A549 (cell line): ENCODE measurements at regions of chr2 and their contacts with region 1.

Region 1: GRCh38 chr2:30361751-30362394 is 85.2 kb upstream of the LCLAT1 start:
- DNase-seq: no peak
- ATAC-seq: no peak
- H3K4me3 ChIP-seq: no peak overlapping the region
- H3K27ac ChIP-seq: peak overlapping the region; percentile 36 to 42; a peak in 3 of 6 replicates
- H3K4me1 ChIP-seq: peaks cover 16% of the 10 kb centered on the region
- CTCF ChIP-seq: no peak
- EP300 ChIP-seq: no peak
- POLR2A ChIP-seq: no peak
- RAD21 ChIP-seq: no peak

Region 2: GRCh38 chr2:30373881-30374302 is 12.0 kb after region 1 on chr2:
- CTCF ChIA-PET with region 1: interaction called, 10 read pairs
- POLR2A ChIA-PET with region 1: no interaction called
- DNase-seq: no peak
- ATAC-seq: peak; percentile 50 to 51; a peak in 5 of 6 replicates
- H3K4me3 ChIP-seq: no peak overlapping the region
- H3K27ac ChIP-seq: no peak overlapping the region; a peak in 1 of 6 replicates
- H3K4me1 ChIP-seq: no peaks in the 10 kb centered on the region
- CTCF ChIP-seq: no peak
- EP300 ChIP-seq: no peak
- POLR2A ChIP-seq: no peak
- RAD21 ChIP-seq: no peak